Activated CD4-positive, alpha-beta T cell treated with anti-CD3 and anti-CD28 coated beads for 36 hours (primary cell): ENCODE measurements at regions of chr17 and their contacts with region 1.

Region 1: DNA sequence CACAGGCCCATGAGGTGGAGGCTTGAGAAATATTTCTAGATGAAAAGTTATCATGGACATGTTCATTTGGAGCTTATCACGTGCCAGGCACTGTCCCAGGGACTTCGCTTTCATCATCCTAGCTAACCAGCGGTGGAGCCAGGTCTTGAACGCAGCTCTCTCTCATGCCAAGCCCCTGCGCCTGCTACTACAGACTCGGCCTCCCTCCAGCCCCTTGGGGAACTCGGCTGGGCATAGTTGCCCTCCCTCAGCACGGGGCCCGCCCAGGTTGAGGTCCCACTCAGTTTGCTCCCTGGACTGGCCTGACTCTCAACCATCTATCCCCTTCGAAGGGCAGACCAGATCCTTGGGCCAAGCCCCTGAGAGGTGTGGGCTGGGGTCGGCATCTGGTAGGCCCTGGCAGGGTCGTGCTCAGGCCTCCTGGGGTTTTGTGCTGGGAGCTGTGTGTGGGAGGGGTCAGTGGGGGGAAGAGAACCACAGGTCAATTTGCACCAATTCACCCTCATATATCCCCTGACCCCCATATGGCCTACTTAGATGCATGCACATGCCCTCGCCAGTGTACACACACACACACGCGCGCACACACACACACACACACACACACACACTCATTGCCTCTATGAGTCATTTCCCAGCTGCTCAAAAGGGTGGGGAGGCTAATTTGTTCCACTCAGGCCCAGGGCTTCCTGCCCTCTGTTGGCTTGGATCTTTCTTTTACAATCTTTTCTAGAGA is 12.1 kb upstream of the SCN4A start:
- DNase-seq: peak; percentile 86
- ATAC-seq: peak; percentile 97
- H3K4me3 Mint-ChIP-seq: peak overlapping the region; percentile 30
- H3K27ac Mint-ChIP-seq: peak overlapping the region; percentile 78
- H3K4me1 Mint-ChIP-seq: peaks cover 23% of the 10 kb centered on the region
- H3K27me3 Mint-ChIP-seq: no peaks in the 10 kb centered on the region

Region 2: GRCh38 chr17:63816669-63817068 is 168.2 kb before region 1 on chr17:
- CTCF ChIA-PET with region 1: no interaction called
- POLR2A ChIA-PET with region 1: no interaction called
- intact Hi-C with region 1: no loop called
- DNase-seq: no peak
- ATAC-seq: no peak
- H3K4me3 Mint-ChIP-seq: no peak overlapping the region
- H3K27ac Mint-ChIP-seq: peak overlapping the region; percentile 1
- H3K4me1 Mint-ChIP-seq: peaks cover 2% of the 10 kb centered on the region
- H3K27me3 Mint-ChIP-seq: no peaks in the 10 kb centered on the region

Region 3: DNA sequence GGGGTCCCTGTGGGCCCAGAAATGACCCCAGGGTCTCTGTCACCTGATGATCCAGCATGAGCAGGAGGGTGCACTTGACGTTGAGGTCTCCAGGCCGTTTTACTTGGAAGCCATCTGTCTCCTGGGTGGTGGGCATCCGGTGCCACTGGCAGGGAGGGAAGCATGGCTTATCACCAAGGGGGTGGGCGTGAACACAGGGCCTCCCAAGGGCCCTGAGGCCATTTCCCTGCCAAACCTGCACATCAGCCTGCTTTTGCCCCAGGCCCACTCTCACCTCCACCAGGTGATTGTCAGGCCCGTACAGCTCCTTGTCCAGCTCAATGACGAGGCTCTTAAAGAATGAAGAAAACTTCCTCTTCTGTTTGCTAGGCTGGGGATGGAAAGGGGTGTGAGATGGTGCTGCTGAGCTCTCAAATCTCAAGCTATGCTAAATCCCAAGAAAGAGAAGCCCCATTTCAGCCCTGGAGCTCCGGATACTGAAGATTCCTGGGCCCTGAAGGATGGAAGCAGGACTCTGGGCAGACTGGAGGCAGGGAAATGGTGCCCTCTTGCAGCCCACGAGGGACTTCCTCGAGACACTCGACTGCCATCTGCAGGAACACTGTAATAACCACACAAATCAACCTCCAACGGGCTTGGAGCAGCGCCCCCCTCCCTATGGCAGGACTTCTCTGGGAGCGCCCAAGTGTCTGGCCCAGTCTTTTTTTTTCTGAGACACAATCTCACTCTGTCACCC is 150.2 kb before region 1 on chr17:
- CTCF ChIA-PET with region 1: no interaction called
- POLR2A ChIA-PET with region 1: no interaction called
- intact Hi-C with region 1: no loop called
- DNase-seq: peak; percentile 77
- ATAC-seq: peak; percentile 89
- H3K4me3 Mint-ChIP-seq: no peak overlapping the region
- H3K27ac Mint-ChIP-seq: peak overlapping the region; percentile 75
- H3K4me1 Mint-ChIP-seq: peaks cover 42% of the 10 kb centered on the region
- H3K27me3 Mint-ChIP-seq: no peaks in the 10 kb centered on the region

Region 4: GRCh38 chr17:63998050-63998720 is 13.4 kb after region 1 on chr17 and contains the start of gene PRR29:
- CTCF ChIA-PET with region 1: interaction called, 11 read pairs
- POLR2A ChIA-PET with region 1: interaction called, 3 read pairs
- intact Hi-C with region 1: loop called in 1 of 2 experiments (anchors 1 kb)
- DNase-seq: peak; percentile 84
- ATAC-seq: peak; percentile 76
- H3K4me3 Mint-ChIP-seq: peak within 1 kb of the TSS; percentile 80
- H3K27ac Mint-ChIP-seq: peak within 1 kb of the TSS; percentile 31
- H3K4me1 Mint-ChIP-seq: peaks cover 30% of the 10 kb centered on the region
- H3K27me3 Mint-ChIP-seq: no peaks in the 10 kb centered on the region
- total RNA-seq, gene PRR29: 1.0 to 1.5 TPM